Posterior cingulate gyrus (tissue), 11 donors: ENCODE measurements at regions of chr19 and their contacts with region 1.

Region 1: GRCh38 chr19:45952686-45953505 is 20.8 kb downstream of the NOVA2 start:
- DNase-seq: peak in 6 of 10 donors; percentile 51 to 93 (median 82)

Region 2: DNA sequence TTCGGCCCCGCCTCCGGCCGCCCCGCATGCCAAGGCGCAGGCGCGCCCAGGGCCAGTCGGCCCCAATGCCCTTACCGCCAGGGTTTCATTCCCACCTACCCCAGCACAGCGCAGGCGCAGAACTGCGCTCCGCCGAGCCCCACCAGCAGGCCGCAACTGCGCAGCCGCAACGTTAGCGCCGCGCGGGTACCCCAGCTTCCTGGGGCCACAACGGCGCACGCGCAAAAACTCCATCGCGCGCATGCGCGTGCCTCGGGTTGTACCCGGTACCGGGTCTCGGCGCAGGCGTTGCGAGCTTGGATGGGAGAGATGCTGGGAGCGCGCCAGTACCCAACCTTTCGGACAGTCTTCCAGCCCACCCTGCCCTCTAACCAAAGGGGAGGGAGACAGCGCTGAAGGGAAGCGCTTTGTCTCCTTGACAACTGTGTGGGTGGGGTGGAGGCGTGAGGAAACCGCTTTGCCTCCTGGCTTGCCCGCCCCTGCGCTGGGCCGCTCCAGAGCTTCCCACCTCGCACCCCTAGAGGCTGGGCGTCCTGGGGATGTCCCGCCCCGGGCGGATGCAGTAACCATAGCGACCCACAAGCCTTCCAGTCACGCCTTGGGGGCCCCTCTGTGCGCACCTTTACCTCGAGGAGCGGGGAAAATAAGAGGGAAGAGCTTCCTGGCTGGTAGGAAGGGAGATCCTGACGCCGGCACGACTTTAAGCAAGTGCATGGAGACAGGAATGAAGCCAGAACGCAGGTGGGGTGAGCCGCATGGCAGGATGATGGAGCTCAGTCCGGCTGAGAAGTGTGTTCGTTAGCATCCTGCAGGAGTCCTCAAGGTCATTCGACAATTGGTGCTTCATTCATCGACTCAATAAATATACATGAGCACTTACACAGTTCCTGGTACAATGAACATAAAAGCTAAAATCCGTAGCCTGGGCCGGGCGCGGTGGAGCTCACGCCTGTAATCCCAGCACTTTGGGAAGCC is 50.0 kb before region 1 on chr19:
- intact Hi-C with region 1: loop called (anchors 10 kb)
- DNase-seq: peak; percentile 95 to 100 (median 98)